Calu3 (cell line): ENCODE measurements at regions of chr12 and their contacts with region 1.

Region 1: GRCh38 chr12:12032851-12033588 is 37.7 kb upstream of the BCL2L14 start:
- DNase-seq: peak; percentile 82
- H3K4me3 Mint-ChIP-seq: peak overlapping the region; percentile 63
- H3K27ac Mint-ChIP-seq: peak overlapping the region; percentile 79
- H3K4me1 Mint-ChIP-seq: peaks cover 14% of the 10 kb centered on the region
- H3K27me3 Mint-ChIP-seq: no peaks in the 10 kb centered on the region
- CTCF ChIP-seq: peak; percentile 70

Region 2: DNA sequence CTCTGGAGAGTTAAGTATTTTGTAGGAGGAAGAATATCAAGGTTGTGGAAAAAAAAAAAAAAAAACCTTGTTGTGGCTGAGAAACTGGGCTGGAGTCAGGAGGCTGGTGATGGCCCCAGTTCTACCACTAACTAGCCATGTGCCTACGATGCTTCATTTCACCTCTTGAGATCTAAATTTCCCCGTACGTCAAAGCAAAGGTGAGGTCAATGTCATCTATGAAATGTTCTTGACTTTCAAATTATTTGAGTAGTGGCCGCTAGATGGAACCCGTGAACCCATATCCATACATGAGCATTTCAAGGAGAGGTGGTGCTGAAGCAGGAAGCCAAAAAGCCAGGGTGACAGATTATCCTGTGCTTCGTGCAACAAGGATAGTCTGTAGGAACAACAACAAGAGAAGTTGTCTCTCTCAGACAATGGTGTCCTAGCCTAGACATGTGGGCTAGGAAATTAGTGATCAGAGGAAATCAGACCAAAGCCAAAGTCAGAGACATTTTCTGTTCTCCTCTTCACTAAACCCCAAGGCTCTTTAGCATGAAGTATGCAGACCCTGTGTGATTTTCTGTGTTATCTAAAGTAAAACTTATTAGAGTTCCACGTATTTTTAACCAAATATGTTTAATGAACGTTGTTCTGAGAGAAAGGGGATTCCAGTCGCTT is 479.0 kb before region 1 on chr12:
- CTCF ChIA-PET with region 1: interaction called, 3 read pairs
- intact Hi-C with region 1: loop called (anchors 1 kb)
- DNase-seq: peak; percentile 64
- H3K4me3 Mint-ChIP-seq: no peak overlapping the region
- H3K27ac Mint-ChIP-seq: no peak overlapping the region
- H3K4me1 Mint-ChIP-seq: peaks cover 25% of the 10 kb centered on the region
- H3K27me3 Mint-ChIP-seq: no peaks in the 10 kb centered on the region
- CTCF ChIP-seq: peak; percentile 46

Region 3: DNA sequence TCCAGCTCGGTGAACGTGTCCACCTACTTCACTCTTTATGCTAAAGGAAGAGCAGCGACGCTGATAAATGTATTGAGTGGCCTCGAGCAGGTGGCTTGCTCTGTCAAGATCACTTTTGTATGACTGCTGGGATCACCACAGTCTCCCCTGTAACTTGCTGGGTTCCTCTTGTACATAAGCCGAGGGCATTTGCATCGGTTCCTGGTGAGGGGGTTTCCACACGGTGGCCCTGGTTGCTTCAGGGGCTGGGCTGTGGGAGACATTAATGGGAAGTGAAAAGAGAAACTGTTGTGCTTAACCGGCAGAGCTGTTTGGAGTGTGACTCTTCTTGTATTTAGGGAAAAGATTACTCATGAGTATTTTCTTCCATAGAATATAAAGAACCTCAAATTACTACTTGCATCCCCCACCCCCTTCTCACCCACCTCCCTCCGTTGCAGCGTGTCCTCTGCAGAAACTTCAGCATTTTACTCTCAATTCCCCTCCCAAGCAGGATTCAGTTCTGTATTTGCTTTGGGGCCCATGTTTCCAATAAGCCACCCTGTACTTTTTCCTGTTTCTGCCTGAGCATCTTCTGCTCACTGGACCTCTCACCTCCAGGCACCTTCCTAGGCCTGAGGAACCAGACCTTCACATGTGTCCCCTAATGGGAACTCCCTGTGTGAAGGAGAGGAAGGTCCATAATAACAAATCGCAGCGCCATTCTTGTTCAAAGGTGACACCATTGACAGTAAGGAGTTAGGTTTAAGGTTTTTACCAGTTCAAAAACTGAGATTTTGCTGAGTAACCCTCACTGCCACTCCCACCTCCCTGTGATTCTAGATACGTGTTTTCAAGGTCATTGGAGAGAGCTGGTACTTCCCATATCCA is 196.5 kb before region 1 on chr12:
- CTCF ChIA-PET with region 1: no interaction called
- intact Hi-C with region 1: loop called (anchors 10 kb)
- DNase-seq: no peak
- H3K4me3 Mint-ChIP-seq: no peak overlapping the region
- H3K27ac Mint-ChIP-seq: no peak overlapping the region
- H3K4me1 Mint-ChIP-seq: peaks cover 86% of the 10 kb centered on the region
- H3K27me3 Mint-ChIP-seq: no peaks in the 10 kb centered on the region
- CTCF ChIP-seq: no peak

Region 4: DNA sequence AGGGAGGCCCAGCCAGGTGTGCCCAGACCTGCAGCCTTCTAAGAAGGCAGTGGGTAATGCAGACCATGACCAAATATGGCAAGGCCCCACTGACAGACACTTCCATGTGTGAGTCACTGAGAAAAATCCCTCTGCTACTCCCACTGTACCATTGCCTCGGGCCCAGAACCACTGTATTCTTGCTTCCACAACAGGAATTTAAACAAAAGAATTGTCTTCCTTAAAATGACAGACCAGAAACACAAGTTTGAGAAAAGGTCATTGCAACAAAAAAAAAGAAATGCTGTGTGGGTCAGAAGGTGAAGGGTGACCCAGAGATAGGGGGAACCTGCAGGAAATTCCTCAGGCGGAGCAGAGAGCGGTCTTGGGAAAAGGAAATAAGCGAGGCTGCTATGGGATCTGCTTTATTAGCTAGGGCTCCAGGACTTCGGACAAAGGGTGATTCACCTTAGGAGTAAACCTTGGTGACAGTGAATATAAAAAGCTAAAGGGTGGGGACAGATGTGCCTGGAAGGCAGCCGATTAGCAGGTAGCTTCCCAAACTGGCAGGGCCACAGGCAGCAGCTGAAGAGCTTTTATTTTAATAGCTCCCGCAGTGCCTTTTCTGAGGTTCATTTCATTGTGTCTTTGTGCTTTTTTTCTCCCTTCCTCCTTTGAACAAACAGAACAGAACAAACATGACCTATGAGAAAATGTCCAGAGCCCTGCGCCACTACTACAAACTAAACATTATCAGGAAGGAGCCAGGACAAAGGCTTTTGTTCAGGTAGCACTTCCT is 147.6 kb before region 1 on chr12:
- CTCF ChIA-PET with region 1: interaction called, 5 read pairs
- intact Hi-C with region 1: loop called (anchors 2 kb)
- DNase-seq: peak; percentile 74
- H3K4me3 Mint-ChIP-seq: peak overlapping the region; percentile 29
- H3K27ac Mint-ChIP-seq: peak overlapping the region; percentile 69
- H3K4me1 Mint-ChIP-seq: peaks cover 70% of the 10 kb centered on the region
- H3K27me3 Mint-ChIP-seq: no peaks in the 10 kb centered on the region
- CTCF ChIP-seq: no peak

Region 5: GRCh38 chr12:12837025-12837872 is 804.2 kb after region 1 on chr12:
- CTCF ChIA-PET with region 1: no interaction called
- intact Hi-C with region 1: no loop called
- DNase-seq: peak; percentile 64
- H3K4me3 Mint-ChIP-seq: peak overlapping the region; percentile 25
- H3K27ac Mint-ChIP-seq: peak overlapping the region; percentile 82
- H3K4me1 Mint-ChIP-seq: peaks cover 70% of the 10 kb centered on the region
- H3K27me3 Mint-ChIP-seq: no peaks in the 10 kb centered on the region
- CTCF ChIP-seq: no peak